ENCODE measurements at regions of chr14 and their contacts with region 1.

Region 1: DNA sequence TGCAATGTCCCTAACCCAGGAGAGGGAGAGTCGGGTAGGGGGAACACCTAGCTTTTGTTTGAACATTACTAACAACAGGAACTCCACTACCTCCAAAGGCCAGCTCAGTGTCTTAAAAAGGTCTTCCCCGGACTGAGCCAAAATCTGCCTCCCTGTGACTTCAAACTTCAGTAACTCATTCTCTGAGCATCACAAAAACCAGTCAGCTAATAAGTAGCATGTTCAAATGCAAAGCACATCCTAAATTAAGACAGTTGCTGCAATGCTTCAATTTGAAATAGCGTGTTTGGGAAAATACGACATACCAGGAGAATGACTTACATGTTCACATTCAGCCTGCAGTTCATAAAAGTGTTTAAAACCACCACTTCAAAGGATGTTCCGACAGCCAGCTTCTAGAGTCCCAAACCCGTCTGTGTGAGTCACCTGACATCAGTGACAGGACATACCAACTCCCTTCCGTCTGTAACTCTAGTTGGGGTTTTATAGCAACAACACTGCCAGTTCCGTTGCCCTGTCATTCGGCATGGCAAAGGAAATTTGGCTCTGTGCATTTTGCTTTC is 13.0 kb downstream of the ZFP36L1 start:
- DNase-seq: peak; percentile 72
- H3K4me3 ChIP-seq: no peak overlapping the region
- H3K27ac ChIP-seq: peak overlapping the region; percentile 82
- H3K4me1 ChIP-seq: peaks cover 24% of the 10 kb centered on the region
- H3K27me3 ChIP-seq: no peaks in the 10 kb centered on the region
- CTCF ChIP-seq: no peak

Region 2: DNA sequence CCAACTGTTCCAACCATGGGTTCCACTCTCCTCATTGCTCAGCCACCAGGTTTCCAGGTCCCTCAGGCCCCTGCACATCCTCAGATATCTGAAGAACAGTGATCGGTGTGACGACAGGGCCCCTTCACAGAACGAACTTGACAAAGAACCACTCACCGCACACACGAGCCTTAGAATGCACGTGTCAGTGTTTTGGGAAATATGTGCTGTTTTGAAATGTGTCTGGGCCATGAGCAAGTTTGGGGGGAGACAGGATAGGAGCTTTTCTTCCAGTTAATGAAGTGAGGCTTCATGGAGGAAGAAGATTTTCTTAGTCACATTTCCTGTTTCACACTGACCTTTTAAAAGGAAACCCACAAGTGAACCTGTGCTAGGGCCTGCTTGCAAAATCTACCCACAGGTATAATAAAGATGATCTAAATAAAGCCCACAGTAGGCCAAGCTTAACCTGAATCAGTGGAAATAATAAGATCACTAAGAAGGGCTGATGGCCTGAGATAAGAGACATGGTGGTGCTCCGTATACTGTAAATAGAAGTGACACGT is 45.5 kb before region 1 on chr14:
- intact Hi-C with region 1: loop called (anchors 5 kb)
- DNase-seq: no peak
- H3K4me3 ChIP-seq: no peak overlapping the region
- H3K27ac ChIP-seq: peak overlapping the region; percentile 44
- H3K4me1 ChIP-seq: no peaks in the 10 kb centered on the region
- H3K27me3 ChIP-seq: no peaks in the 10 kb centered on the region
- CTCF ChIP-seq: no peak

Measured in colonic mucosa (tissue), 4 donors.